ENCODE measurements at regions of chr11 and their contacts with region 1.

Region 1: DNA sequence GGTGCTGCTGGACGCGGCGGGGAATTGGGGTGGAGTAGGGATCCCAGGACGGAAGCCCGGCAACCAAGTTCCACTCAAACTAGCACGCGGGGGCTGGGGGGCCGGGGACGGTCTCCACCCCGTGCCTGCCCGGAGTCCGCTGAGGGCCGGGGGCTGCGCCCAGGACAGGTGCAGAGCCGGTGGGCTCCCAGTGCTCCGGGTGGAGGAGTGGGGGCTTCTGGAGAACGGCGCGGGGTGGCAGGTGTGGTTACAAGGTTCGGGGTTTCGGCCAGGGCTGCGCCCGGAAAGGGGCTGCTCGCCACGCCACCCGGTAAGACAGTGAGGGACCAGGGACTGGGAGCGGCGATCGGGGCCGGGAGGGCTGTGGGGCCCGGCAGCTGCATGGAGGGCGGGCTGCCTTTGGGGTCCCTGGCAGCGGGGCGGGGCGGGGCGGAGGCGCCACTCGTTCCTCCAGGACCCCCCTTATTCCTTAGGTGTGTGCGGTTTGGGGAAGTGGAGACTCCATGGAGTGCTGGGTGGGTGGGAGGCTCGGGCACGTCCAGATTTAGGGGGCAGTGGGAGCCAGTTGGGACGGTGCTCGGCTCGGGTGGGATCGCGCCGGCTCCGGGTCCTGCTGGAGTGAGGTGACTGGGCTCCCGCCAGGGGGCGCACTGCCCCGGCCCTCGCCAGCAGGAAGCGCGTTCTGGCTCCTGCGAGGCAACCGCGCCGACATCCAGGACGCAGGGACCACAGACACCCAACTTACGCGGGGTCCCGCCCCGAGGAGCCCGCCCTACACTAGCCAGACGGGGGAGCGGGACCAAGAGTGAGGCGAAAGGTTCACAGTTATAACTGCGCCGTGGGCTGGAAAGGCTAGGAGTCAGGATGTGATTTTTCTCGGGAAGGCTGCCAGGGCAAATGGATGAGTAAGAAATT is 868 bp downstream of the TSPAN18 start:
- DNase-seq: peak; percentile 92
- ATAC-seq: peak; percentile 92

Region 2: DNA sequence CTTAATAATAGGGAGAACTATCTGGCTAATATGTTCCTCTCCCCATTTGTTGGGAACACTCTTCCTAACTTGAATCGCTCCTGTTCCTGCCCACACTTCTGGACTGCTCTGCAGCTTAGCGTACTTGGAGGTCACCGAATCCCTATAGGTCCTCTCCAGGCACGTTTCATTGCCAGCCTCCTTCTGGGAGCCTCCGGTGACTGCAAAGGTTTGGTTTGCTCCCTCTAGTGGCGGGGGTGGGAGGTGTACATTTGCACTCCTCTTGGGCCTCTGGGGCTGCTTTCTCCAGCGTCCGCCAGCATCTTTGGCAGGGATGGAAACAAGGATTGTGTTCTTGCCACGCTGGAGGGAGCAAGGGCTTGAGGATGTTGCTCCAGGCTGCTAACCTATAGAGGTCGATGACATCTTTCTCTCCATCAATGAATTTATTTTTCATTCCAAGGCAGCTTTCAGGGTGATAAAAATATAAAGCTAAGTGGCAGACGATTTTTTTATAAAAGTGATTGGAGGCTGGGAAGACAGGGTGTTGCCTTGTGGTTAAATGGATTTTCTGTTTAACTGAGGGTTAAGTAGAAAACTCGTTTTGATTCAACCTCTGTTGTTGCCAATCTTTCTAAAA is 47.8 kb after region 1 on chr11:
- intact Hi-C with region 1: loop called (anchors 5 kb)
- DNase-seq: peak; percentile 60
- ATAC-seq: peak; percentile 42

Region 3: DNA sequence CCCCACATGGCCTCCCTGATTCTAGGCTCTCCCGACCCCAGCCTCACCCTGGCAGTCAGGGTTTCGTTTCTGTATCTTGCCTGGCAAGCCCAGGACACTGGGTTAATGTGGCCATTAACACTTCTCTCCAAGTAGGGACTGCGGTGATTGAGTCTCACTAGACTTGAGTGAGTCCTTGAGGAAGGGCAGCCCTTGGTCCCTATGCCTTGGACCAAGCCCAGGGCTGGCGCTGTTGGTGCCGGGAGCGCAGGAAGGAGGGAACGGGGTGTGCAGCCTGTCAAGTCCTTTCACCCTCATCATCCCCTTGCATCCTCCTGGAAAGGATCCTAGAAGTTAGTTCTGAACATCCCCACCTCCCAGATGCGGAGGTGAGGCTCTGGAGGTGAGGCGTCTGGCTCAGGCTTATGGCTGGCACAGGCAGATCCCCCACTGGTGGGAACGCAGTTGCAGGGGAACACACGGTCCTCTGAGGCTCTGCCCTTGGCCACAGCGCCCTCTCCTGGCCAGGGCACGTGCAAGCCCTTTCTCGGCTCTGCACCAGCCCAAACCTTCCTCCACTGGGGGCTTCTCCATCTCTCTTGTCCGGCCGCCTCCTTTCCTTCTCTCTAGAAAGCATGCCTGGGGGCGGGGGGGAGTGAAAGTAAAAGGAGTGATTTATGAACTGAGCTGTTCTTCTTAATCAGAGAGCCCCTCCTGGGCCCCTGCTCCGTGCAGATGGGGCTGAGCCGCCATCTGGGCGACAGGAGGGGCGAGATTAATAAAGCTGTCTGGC is 166.4 kb after region 1 on chr11:
- intact Hi-C with region 1: loop called (anchors 5 kb)
- DNase-seq: peak; percentile 80
- ATAC-seq: peak; percentile 93

Region 4: GRCh38 chr11:44911029-44911814 is 183.6 kb after region 1 on chr11:
- intact Hi-C with region 1: loop called (anchors 5 kb)
- DNase-seq: peak; percentile 75
- ATAC-seq: peak; percentile 88

Region 5: DNA sequence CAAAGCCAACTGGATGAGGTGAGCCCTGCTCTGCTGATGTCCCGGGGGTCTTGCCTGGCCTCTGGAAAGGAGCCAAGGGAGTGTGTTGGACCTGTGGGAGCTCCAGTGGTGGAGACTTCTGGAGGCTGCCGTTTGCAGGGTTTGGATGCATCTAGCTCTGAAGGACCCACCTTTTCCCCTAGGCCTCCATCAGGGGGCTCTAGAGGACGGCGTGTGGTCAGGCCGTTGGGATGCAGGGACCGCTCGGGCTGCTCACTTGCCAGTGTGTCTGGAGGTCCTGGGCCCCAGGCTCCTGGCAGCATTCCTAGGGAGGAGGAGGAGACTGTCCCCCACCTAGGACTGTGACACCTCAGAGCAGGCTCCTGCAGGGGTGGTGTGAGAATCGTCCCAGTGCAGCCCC is 477.1 kb after region 1 on chr11:
- intact Hi-C with region 1: no loop called
- DNase-seq: no peak
- ATAC-seq: no peak

Measured in Right ventricle myocardium superior (tissue), 1 donor.